ENCODE measurements at regions of chr21 and their contacts with region 1.

Region 1: DNA sequence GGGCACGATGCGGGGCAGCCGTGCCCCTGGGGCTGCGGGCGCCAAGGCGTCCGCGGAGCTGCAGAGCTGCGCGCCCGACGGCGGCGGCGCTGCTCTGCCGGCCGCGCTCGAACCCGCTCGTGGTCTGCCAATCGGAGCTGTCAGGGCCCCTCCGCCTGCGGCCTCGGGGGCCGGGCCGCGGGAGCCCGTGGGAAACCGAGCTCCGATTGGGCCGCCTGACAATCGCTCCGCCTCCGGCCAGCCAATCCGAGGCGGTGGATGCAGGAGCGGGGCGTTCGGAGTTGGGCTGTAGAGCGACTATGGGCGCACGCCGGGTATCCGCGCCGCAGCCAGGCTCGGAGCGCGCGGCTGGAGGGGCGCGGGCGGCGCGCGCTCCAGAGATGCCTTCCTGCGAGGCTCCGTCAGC is 100.5 kb upstream of the SOD1 start:
- DNase-seq: peak; percentile 92
- H3K4me3 Mint-ChIP-seq: peak overlapping the region; percentile 81
- H3K27ac Mint-ChIP-seq: no peak overlapping the region
- H3K4me1 Mint-ChIP-seq: peaks cover 34% of the 10 kb centered on the region
- H3K27me3 Mint-ChIP-seq: peaks cover 40% of the 10 kb centered on the region

Region 2: DNA sequence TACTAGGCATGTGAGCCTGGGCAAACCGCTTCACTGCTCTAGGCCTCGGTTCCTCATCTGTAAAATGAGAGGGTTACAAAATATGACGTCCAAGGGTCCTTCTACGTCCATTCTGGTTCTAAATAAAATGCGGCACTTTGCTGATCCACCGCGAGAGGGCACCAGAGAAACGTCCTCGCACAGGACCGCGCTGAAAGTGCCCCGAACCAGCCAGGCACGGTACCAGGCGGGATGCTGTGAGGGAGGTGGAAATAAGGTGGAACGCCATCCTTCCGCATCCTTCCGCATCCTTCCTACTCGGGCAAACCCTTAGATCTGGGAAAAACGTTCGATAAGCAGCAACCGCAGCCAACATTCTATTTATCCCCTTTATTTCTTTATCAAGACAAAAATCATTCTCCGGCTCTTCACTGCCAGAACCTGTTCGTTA is 460.4 kb before region 1 on chr21:
- intact Hi-C with region 1: loop called (anchors 10 kb)
- DNase-seq: peak; percentile 60
- H3K4me3 Mint-ChIP-seq: no peak overlapping the region
- H3K27ac Mint-ChIP-seq: no peak overlapping the region
- H3K4me1 Mint-ChIP-seq: peaks cover 27% of the 10 kb centered on the region
- H3K27me3 Mint-ChIP-seq: peaks cover 13% of the 10 kb centered on the region

Region 3: GRCh38 chr21:31198575-31198974 is 360.4 kb before region 1 on chr21:
- intact Hi-C with region 1: loop called (anchors 2 kb)
- DNase-seq: no peak
- H3K4me3 Mint-ChIP-seq: no peak overlapping the region
- H3K27ac Mint-ChIP-seq: no peak overlapping the region
- H3K4me1 Mint-ChIP-seq: peaks cover 39% of the 10 kb centered on the region
- H3K27me3 Mint-ChIP-seq: no peaks in the 10 kb centered on the region

Region 4: DNA sequence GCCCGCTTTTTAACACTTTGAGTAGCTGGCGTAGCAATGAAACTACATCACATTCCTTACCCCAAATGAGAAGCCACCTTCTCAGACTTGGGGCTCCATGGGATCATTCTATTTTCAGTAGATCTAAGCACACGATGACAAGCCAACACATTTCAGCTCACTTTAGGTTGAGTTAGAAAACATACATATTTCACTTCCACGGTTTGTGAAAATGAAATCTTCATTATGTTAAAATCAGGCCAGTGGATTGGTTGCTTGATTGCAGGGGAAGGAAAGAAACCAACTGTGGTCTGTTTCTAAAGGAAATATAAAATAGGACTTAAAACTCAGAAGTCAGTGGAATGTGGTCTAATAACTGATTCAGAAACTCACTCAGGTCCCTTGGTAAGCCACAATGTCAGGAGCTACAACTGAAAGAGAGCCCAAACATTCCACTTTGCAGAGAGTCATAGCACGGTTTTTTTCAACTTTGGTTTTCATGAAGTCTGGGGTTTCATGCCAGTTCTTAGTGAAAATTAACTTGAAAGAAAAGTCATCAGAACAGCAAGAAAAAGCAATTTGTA is 132.6 kb before region 1 on chr21:
- intact Hi-C with region 1: loop called (anchors 1 kb)
- DNase-seq: no peak
- H3K4me3 Mint-ChIP-seq: no peak overlapping the region
- H3K27ac Mint-ChIP-seq: no peak overlapping the region
- H3K4me1 Mint-ChIP-seq: peaks cover 13% of the 10 kb centered on the region
- H3K27me3 Mint-ChIP-seq: peaks cover 1% of the 10 kb centered on the region

Region 5: GRCh38 chr21:31509194-31510017 is 49.6 kb before region 1 on chr21:
- intact Hi-C with region 1: loop called (anchors 2 kb)
- DNase-seq: peak; percentile 80
- H3K4me3 Mint-ChIP-seq: no peak overlapping the region
- H3K27ac Mint-ChIP-seq: no peak overlapping the region
- H3K4me1 Mint-ChIP-seq: peaks cover 24% of the 10 kb centered on the region
- H3K27me3 Mint-ChIP-seq: peaks cover 40% of the 10 kb centered on the region

Region 6: GRCh38 chr21:31623664-31624063 is 64.7 kb after region 1 on chr21:
- intact Hi-C with region 1: no loop called
- DNase-seq: no peak
- H3K4me3 Mint-ChIP-seq: no peak overlapping the region
- H3K27ac Mint-ChIP-seq: no peak overlapping the region
- H3K4me1 Mint-ChIP-seq: peaks cover 11% of the 10 kb centered on the region
- H3K27me3 Mint-ChIP-seq: peaks cover 4% of the 10 kb centered on the region

Region 7: DNA sequence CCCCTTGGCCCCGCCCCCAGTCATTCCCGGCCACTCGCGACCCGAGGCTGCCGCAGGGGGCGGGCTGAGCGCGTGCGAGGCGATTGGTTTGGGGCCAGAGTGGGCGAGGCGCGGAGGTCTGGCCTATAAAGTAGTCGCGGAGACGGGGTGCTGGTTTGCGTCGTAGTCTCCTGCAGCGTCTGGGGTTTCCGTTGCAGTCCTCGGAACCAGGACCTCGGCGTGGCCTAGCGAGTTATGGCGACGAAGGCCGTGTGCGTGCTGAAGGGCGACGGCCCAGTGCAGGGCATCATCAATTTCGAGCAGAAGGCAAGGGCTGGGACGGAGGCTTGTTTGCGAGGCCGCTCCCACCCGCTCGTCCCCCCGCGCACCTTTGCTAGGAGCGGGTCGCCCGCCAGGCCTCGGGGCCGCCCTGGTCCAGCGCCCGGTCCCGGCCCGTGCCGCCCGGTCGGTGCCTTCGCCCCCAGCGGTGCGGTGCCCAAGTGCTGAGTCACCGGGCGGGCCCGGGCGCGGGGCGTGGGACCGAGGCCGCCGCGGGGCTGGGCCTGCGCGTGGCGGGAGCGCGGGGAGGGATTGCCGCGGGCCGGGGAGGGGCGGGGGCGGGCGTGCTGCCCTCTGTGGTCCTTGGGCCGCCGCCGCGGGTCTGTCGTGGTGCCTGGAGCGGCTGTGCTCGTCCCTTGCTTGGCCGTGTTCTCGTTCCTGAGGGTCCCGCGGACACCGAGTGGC is 100.7 kb after region 1 on chr21 and contains the start of gene SOD1:
- intact Hi-C with region 1: loop called (anchors 2 kb)
- DNase-seq: peak; percentile 96
- H3K4me3 Mint-ChIP-seq: peak within 1 kb of the TSS; percentile 99
- H3K27ac Mint-ChIP-seq: peak within 1 kb of the TSS; percentile 98
- H3K4me1 Mint-ChIP-seq: peaks cover 47% of the 10 kb centered on the region
- H3K27me3 Mint-ChIP-seq: no peaks in the 10 kb centered on the region
- total RNA-seq, gene SOD1: 284 and 286 TPM in 2 replicates

Region 8: GRCh38 chr21:31713973-31714740 is 155.2 kb after region 1 on chr21:
- intact Hi-C with region 1: loop called (anchors 5 kb)
- DNase-seq: no peak
- H3K4me3 Mint-ChIP-seq: no peak overlapping the region
- H3K27ac Mint-ChIP-seq: peak overlapping the region; percentile 87
- H3K4me1 Mint-ChIP-seq: peaks cover 39% of the 10 kb centered on the region
- H3K27me3 Mint-ChIP-seq: no peaks in the 10 kb centered on the region